Posterior vena cava (tissue), 2 donors: ENCODE measurements at regions of chr11 and their contacts with region 1.

Region 1: GRCh38 chr11:44927174-44927661 is 23.5 kb downstream of the TP53I11 start:
- DNase-seq: no peak

Region 2: GRCh38 chr11:44726283-44727113 is 200.7 kb before region 1 on chr11 and contains the start of gene TSPAN18:
- intact Hi-C with region 1: no loop called
- DNase-seq: no peak
- total RNA-seq, gene TSPAN18: 41.4 to 65.8 TPM

Region 3: GRCh38 chr11:44893846-44894617 is 33.2 kb before region 1 on chr11:
- intact Hi-C with region 1: loop called in 1 of 2 experiments (anchors 1 kb)
- DNase-seq: peak; percentile 90

Region 4: DNA sequence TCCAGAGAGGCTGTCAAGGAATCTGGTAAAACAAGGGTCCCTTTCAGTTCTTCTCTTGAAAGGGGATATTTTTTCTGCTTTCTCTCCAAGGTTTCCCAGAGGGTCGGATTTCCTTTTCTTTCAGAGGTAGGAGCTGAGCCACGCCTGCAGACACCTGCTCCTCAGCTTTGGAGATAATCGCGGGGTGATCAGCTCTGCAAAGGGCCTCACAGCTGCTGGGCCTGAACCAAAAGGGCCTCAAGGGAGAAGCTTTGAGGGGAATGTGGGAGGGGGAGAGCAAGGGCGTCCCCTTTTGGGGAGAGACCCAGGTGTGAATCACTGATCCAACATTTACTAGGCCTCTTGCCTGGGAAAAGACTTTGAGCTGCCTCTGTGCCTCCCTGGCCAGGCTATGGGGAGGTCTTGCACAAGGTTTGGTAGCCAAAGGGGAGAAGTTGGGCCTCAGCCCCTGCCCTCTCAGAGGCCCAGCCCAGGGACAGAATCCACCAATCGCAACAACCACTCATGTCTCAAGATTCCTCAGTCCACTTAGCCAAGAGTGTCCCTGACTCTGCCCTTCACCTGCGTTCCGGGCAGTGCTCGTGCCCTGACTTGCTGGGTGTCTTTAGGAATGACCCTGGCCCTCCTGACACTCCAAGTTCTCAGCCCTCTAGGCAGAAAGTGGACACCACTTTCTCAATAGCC is 37.5 kb after region 1 on chr11:
- intact Hi-C with region 1: no loop called
- DNase-seq: no peak

Region 5: DNA sequence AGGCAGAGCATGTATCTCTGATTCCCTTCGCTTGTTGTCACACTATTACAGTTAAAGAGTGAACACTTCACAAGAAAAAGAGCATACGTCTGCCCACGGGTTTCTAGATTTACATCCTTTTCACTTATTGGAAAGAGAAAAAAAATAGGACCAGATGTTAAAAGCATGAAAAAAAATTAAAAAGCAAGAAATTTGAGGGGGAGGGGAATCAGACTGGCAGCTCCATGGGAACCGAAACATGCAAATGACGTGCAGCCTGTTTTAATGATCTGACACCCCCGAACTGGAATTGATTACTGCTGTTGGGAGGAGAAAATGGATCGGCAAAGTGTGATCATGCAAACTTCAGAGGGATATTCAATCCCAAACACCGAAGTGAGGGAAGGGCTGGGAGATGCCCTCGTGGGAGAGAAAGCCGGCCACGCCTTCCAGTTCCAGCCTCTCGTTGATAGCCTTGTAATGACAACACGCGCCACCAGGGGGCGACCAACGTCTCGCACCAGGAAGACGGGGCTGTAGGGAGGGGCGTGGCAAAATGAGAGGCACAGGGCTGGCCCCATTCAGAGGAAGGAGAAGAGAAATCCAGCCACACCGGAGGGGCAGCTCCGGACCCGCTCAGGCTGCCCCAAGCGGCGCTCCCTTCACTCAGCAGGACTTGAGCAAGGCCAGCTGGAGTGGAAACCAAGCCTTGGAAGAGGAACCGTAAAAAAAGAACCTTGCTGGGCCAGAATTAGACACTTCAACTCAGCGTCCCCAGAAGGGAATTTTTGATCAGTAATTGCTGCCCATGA is 412.7 kb after region 1 on chr11:
- intact Hi-C with region 1: loop called in 1 of 2 experiments (anchors 10 kb)
- DNase-seq: peak; percentile 98